Esophagus squamous epithelium (tissue), 5 donors: ENCODE measurements at regions of chr12 and their contacts with region 1.

Region 1: DNA sequence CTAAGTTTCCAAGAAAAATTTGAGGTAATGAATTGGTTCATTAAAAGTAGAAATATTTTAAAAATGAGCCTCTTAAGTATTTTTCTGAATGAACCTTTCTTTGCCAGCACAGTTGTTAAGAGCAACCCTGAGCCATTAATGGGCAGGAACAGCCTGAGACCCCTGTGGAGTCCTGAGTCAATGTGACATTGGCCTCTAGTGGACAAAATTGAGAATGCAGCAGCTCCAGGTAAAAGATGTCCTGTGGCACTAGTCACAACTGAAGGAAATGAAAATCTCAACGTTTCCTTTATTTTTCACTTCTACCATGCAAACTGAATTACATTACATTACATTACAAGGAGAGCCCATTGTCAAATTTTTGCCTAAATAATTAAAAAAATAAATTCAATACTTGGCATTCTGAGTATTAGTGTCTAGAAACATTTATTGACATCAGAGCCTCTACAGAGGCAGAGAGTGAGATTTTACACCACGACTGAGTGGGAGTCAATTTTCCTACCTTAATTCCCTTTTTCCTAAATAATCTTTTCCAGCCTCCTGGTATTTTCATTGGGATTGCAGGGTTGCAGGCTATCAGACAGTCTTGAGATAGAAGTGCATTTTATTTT is 135.7 kb downstream of the PPM1H start:
- DNase-seq: no peak
- H3K4me3 ChIP-seq: no peak overlapping the region
- H3K27ac ChIP-seq: no peak overlapping the region
- H3K4me1 ChIP-seq: peaks cover 0 to 3% (median 0%) of the 10 kb centered on the region in 3 donors
- H3K27me3 ChIP-seq: no peaks in the 10 kb centered on the region
- CTCF ChIP-seq: peak; percentile 78 to 93 (median 89)
- POLR2A ChIP-seq: no peak

Region 2: DNA sequence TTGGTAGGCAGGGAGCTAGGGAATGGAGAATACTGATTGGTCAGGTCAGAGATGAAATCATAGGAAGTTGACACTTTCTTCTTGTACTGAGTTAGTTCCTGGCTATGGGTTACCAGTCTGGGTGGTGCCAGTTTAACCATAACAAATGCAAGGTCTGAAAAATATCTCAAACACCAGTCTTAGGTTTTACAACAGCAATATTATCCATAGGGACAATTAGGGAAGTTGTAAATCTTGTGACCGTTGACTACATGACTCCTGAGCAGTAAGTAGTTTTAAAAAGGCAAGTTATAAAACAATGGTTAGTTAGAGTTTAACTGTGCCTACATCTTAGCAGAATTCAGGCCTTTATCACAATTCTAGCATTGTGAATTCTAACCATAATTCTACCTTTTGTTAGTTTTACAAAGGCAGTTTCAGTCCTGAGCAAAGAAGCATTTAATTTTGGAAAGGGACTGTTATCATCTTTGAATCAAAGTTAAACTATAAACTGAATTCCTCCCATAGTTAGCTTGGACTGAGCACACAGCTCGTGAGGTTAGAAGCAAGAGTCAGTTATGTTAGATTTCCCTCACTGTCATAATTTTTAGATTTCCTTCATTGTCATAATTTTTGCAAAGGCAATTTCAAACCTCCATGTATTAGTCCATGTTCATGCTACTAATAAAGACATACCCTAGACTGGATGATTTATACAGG is 352.3 kb before region 1 on chr12:
- intact Hi-C with region 1: loop called (anchors 10 kb)
- DNase-seq: no peak
- H3K4me3 ChIP-seq: no peak overlapping the region
- H3K27ac ChIP-seq: no peak overlapping the region
- H3K4me1 ChIP-seq: no peaks in the 10 kb centered on the region
- H3K27me3 ChIP-seq: no peaks in the 10 kb centered on the region
- CTCF ChIP-seq: no peak
- POLR2A ChIP-seq: no peak

Region 3: DNA sequence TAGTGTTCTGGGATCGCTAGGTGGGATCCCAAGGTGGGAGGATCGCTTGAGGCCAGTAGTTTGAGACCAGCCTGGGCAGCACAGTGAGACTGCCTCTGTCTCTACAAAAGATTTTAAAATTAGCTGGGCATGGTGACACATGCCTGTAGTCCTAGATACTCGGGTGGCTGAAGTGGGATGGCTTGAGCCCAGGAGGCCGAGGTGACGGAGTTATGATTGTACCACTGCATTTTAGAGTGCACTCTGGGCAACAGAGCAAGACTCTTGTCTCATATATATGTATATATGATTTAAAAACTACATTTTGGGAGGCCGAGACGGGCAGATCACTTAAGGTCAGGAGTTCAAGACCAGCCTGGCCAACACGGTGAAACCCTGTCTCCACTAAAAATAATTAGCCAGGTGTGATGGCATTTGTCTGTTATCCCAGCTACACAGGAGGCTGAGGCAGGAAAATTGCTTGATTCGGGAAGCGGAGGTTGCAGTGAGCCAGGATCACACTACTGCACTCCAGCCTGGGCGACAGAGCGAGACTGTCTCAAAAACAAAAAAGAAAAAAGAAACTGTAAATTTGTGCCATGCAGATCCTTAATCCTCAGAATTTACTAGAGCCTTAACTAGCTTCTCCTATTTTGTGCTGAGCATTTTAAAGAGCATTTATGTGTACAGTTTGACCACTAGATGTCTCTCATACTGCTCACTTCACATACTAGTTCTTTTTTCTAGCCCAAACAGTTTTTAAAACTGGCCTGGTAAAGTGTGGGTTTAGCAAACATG is 217.8 kb before region 1 on chr12:
- intact Hi-C with region 1: loop called (anchors 5 kb)
- DNase-seq: no peak
- H3K4me3 ChIP-seq: no peak overlapping the region
- H3K27ac ChIP-seq: no peak overlapping the region
- H3K4me1 ChIP-seq: no peaks in the 10 kb centered on the region
- H3K27me3 ChIP-seq: no peaks in the 10 kb centered on the region
- CTCF ChIP-seq: peak; percentile 35 to 74 (median 61)
- POLR2A ChIP-seq: no peak

Region 4: GRCh38 chr12:62598846-62599245 is 200.4 kb before region 1 on chr12:
- intact Hi-C with region 1: no loop called
- DNase-seq: no peak
- H3K4me3 ChIP-seq: no peak overlapping the region
- H3K27ac ChIP-seq: no peak overlapping the region
- H3K4me1 ChIP-seq: peaks cover 0 to 12% (median 5%) of the 10 kb centered on the region in 3 donors
- H3K27me3 ChIP-seq: no peaks in the 10 kb centered on the region
- CTCF ChIP-seq: no peak
- POLR2A ChIP-seq: no peak

Region 5: GRCh38 chr12:62934799-62935674 is 135.8 kb after region 1 on chr12 and contains the start of gene PPM1H:
- intact Hi-C with region 1: no loop called
- DNase-seq: no peak
- H3K4me3 ChIP-seq: peak within 1 kb of the TSS; percentile 43 to 85 (median 62)
- H3K27ac ChIP-seq: peak within 1 kb of the TSS in 3 of 4 donors; percentile 19 to 54 (median 49)
- H3K4me1 ChIP-seq: peaks cover 10 to 27% (median 14%) of the 10 kb centered on the region in 3 donors
- H3K27me3 ChIP-seq: peaks cover 0 to 52% (median 0%) of the 10 kb centered on the region in 4 donors
- CTCF ChIP-seq: peak in 2 of 6 experiments; percentile 15 to 38
- POLR2A ChIP-seq: no peak
- total RNA-seq, gene PPM1H: 0.09 to 7.6 (median 0.76) TPM in 3 of 4 donors, not detected in the other